Naive thymus-derived CD4-positive, alpha-beta T cell (primary cell): ENCODE measurements at regions of chr10 and their contacts with region 1.

Region 1: DNA sequence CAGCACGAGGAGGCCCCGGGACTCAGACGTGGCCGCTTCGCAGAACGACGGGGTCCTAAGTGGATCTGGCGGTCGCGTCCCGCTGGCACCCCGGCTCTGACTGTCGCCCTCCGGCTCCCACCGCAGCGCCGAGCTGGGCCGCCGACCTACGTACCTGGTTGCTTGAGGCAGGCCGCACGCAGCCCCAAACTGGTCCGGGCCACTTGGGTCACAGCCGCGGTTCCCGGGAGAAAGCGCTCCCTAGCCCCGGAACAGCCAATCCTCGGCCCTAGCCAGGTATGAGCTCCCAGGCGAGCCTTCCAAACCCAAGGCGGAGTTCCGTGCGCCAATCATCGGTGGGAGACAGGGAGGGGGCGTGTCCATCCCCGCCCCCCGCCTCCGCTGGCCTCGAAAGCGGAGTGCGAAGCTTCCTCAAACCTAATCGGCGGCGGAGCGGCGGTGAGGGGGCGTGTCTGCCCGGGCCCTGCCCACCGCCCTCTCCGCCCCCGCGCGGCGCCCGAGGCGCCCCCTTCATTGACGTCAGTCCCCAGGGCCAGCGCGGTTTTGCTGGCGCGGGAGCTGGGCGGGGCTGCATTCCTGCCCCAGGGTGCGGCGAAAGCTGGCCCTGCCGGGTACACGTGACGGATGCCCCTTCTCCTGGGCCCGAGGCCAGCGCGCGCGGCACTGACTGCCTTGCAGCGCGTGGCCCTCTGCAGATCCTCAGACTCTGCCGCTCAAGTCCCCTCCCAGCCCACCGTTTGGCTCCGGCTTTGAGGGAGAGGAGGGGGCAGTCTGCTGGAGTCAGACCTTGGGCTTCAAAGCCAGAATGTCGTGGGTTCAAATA is at the start of gene AVPI1:
- DNase-seq: peak; percentile 94 to 97 (median 96)
- ATAC-seq: peak; percentile 97
- H3K4me3 ChIP-seq: peak within 1 kb of the TSS; percentile 80
- H3K4me3 Mint-ChIP-seq: peak within 1 kb of the TSS; percentile 85 to 90 (median 88)
- H3K27ac ChIP-seq: peak within 1 kb of the TSS; percentile 81
- H3K27ac Mint-ChIP-seq: peak within 1 kb of the TSS; percentile 28 to 96 (median 91)
- H3K4me1 ChIP-seq: peaks cover 5 to 25% of the 10 kb centered on the region in 2 donors
- H3K4me1 Mint-ChIP-seq: peaks cover 9 to 30% (median 19%) of the 10 kb centered on the region in 7 donors
- H3K27me3 ChIP-seq: no peaks in the 10 kb centered on the region
- H3K27me3 Mint-ChIP-seq: peaks cover 0 to 2% (median 0%) of the 10 kb centered on the region in 5 donors
- total RNA-seq, gene AVPI1: 0.65 to 10.6 (median 2.5) TPM

Region 2: GRCh38 chr10:97170326-97170725 is 516.8 kb before region 1 on chr10:
- CTCF ChIA-PET with region 1: no interaction called
- POLR2A ChIA-PET with region 1: no interaction called
- intact Hi-C with region 1: no loop called
- DNase-seq: no peak
- ATAC-seq: no peak
- H3K4me3 ChIP-seq: no peak overlapping the region
- H3K4me3 Mint-ChIP-seq: no peak overlapping the region
- H3K27ac ChIP-seq: no peak overlapping the region
- H3K27ac Mint-ChIP-seq: no peak overlapping the region
- H3K4me1 ChIP-seq: no peaks in the 10 kb centered on the region
- H3K4me1 Mint-ChIP-seq: no peaks in the 10 kb centered on the region
- H3K27me3 ChIP-seq: no peaks in the 10 kb centered on the region
- H3K27me3 Mint-ChIP-seq: peaks cover 7 to 28% (median 15%) of the 10 kb centered on the region in 5 donors

Region 3: DNA sequence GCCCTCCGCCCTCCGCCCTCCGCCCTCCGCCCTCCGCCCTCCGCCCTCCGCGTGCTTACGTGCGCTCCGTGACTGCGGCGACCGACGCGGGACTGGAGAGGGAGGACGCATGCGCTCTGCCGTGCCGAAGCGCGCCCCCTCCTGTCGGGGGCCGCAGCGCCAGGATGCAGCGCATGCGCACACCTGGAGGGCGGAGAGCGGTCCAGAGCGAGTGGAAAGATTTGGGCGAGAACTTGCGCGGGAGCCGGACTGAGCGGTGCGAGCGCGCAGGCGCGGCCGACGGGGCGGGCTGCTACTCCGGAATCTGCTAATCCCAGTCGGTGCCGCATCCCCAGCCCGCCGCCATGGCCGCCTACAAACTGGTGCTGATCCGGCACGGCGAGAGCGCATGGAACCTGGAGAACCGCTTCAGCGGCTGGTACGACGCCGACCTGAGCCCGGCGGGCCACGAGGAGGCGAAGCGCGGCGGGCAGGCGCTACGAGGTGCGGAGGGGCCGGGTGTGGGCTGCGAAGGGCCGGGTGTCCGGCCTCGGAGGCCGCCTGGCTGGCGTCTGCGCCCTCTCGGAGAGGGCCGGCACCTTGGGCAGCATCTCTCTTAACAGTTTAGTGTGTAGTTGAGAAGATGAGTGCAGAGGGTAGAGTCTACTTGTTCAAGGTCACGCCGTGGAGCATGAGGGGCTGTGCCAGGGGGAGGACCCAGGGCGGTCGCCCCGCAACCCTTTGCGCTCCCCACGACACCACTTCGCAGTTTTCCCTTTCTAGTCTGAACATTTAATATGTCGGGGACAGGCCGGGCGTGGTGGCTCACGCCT is 261.0 kb before region 1 on chr10 and contains the start of gene PGAM1:
- CTCF ChIA-PET with region 1: no interaction called
- POLR2A ChIA-PET with region 1: no interaction called
- intact Hi-C with region 1: loop called in 1 of 2 experiments (anchors 1 kb)
- DNase-seq: peak; percentile 93 to 98 (median 97)
- ATAC-seq: peak; percentile 91
- H3K4me3 ChIP-seq: peak within 1 kb of the TSS; percentile 92
- H3K4me3 Mint-ChIP-seq: peak within 1 kb of the TSS; percentile 83 to 97 (median 95)
- H3K27ac ChIP-seq: peak within 1 kb of the TSS; percentile 87
- H3K27ac Mint-ChIP-seq: peak within 1 kb of the TSS; percentile 77 to 99 (median 95)
- H3K4me1 ChIP-seq: peaks cover 20 to 29% of the 10 kb centered on the region in 2 donors
- H3K4me1 Mint-ChIP-seq: peaks cover 10 to 53% (median 34%) of the 10 kb centered on the region in 7 donors
- H3K27me3 ChIP-seq: no peaks in the 10 kb centered on the region
- H3K27me3 Mint-ChIP-seq: peaks cover 0 to 2% (median 0%) of the 10 kb centered on the region in 5 donors
- total RNA-seq, gene PGAM1: 58.5 to 536 (median 69.8) TPM

Region 4: DNA sequence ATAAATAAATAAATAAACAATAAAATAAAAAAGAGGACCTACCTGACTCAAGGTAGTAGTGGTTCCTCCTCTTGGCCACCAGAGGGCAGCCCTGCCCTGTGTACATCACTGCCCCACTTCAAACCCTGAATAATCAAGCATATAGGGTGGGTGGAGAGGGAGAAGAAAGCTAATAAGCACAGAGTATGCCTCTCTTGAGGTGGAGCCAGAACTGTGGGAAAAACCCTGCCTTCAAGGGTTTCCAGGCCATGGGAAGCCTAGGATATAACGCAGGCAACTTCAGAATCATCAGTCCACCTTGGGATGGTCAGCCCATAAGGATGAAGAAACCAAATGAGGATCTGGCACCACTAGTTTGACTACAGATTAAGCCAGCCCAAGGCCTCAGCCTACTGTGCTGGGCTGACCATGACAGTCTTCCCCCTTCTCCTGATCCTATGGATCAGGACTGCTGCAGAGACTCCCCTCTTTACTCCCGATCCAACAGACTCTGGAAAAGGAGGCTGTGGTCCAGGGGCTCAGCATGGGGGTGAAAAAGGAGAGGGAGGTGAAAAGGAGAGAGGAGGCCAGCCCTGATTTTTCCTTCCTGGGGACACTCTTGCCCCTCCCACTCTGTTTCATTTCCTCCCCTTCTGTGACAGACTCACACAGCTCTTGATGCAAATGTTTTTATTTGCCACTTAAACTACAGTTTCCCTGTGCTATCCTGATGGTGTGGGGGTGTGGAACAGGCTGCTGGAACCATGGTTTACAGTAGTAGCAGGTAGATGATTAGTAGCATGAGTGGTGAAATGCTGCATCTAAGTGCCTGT is 10.2 kb before region 1 on chr10:
- CTCF ChIA-PET with region 1: interaction called, 18 read pairs
- POLR2A ChIA-PET with region 1: interaction called, 9 read pairs
- intact Hi-C with region 1: loop called (anchors 1 kb)
- DNase-seq: peak; percentile 35 to 60 (median 48)
- ATAC-seq: peak; percentile 90
- H3K4me3 ChIP-seq: no peak overlapping the region
- H3K4me3 Mint-ChIP-seq: no peak overlapping the region
- H3K27ac ChIP-seq: no peak overlapping the region
- H3K27ac Mint-ChIP-seq: peak overlapping the region in 1 of 9 donors; percentile 13
- H3K4me1 ChIP-seq: no peaks in the 10 kb centered on the region
- H3K4me1 Mint-ChIP-seq: peaks cover 0 to 16% (median 0%) of the 10 kb centered on the region in 7 donors
- H3K27me3 ChIP-seq: no peaks in the 10 kb centered on the region
- H3K27me3 Mint-ChIP-seq: no peaks in the 10 kb centered on the region

Region 5: DNA sequence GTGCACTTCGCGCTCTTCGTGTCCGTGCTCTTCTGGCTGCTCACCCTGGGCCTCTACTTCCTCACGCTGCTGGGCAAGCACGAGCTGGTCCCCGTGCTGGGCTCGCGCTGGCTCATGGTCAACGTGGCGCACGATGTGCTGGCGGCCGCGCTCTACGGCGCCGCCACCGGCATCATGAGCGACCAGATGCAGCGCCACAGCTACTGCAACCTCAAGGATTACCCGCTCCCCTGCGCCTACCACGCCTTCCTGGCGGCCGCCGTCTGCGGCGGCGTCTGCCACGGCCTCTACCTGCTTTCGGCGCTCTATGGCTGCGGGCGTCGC is 26.8 kb after region 1 on chr10:
- CTCF ChIA-PET with region 1: interaction called, 7 read pairs
- POLR2A ChIA-PET with region 1: interaction called, 7 read pairs
- intact Hi-C with region 1: loop called in 1 of 2 experiments (anchors 1 kb)
- DNase-seq: peak in 8 of 9 donors; percentile 28 to 67 (median 40)
- ATAC-seq: peak; percentile 83
- H3K4me3 ChIP-seq: peak overlapping the region; percentile 69
- H3K4me3 Mint-ChIP-seq: peak overlapping the region; percentile 95 to 100 (median 99)
- H3K27ac ChIP-seq: no peak overlapping the region
- H3K27ac Mint-ChIP-seq: peak overlapping the region in 7 of 9 donors; percentile 44 to 95 (median 80)
- H3K4me1 ChIP-seq: peaks cover 5 to 6% of the 10 kb centered on the region in 2 donors
- H3K4me1 Mint-ChIP-seq: peaks cover 5 to 21% (median 11%) of the 10 kb centered on the region in 7 donors
- H3K27me3 ChIP-seq: no peaks in the 10 kb centered on the region
- H3K27me3 Mint-ChIP-seq: peaks cover 14 to 43% (median 19%) of the 10 kb centered on the region in 5 donors

Region 6: DNA sequence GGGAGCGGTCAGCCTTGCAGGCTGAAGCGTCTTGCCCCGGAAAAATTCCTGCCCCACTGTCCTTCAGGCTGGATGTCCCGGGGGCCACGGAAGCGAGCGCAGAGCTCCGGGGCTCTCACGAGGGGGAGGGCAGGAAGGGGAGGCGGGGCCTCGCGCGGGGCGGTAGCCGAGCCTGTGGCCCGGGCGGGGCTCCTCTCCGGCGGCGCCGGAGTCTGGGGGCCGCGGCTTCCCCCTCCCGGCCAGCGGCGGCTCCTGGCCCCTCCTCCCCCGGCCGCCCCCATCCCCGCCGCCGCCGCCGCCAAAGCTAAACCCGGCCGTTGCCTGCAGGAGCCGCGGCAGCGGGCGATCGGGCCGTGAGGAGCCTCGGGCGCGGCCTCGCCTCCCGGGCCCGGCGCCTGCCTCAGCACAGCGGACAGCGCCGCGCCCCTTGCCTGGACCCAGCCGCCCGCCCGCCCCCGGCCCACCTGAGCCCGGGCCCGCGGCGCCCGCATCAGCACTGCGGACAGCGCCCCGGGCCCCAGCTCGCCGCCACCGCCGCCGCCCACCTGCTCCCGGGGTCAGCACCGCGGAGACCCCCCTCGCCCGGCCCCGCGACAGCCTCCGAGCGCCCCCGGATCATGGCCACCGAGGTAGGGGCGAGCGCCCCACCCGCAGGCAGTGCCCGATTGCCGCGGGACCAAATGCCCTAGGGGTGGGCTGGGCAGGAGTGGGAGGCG is 162.7 kb after region 1 on chr10 and contains the start of gene GOLGA7B:
- CTCF ChIA-PET with region 1: no interaction called
- POLR2A ChIA-PET with region 1: interaction called, 3 read pairs
- intact Hi-C with region 1: loop called (anchors 1 to 5 kb)
- DNase-seq: peak; percentile 43 to 70 (median 66)
- ATAC-seq: peak; percentile 87
- H3K4me3 ChIP-seq: peak within 1 kb of the TSS; percentile 74
- H3K4me3 Mint-ChIP-seq: peak within 1 kb of the TSS; percentile 84 to 94 (median 90)
- H3K27ac ChIP-seq: peak within 1 kb of the TSS; percentile 61
- H3K27ac Mint-ChIP-seq: peak within 1 kb of the TSS; percentile 70 to 93 (median 87)
- H3K4me1 ChIP-seq: peaks cover 25 to 32% of the 10 kb centered on the region in 2 donors
- H3K4me1 Mint-ChIP-seq: peaks cover 21 to 49% (median 37%) of the 10 kb centered on the region in 7 donors
- H3K27me3 ChIP-seq: no peaks in the 10 kb centered on the region
- H3K27me3 Mint-ChIP-seq: peaks cover 0 to 4% (median 0%) of the 10 kb centered on the region in 5 donors
- total RNA-seq, gene GOLGA7B: 5.8 to 8.5 (median 6.5) TPM